ENCODE measurements at regions of chr5 and their contacts with region 1.

Region 1: GRCh38 chr5:148730943-148731861 is 76.9 kb upstream of the HTR4 start:
- DNase-seq: peak; percentile 38 to 76 (median 58)
- H3K4me3 ChIP-seq: no peak overlapping the region
- H3K4me3 Mint-ChIP-seq: peak overlapping the region; percentile 59 to 89 (median 79)
- H3K27ac ChIP-seq: peak overlapping the region; percentile 10
- H3K27ac Mint-ChIP-seq: peak overlapping the region in 7 of 8 donors; percentile 23 to 83 (median 69)
- H3K4me1 ChIP-seq: no peaks in the 10 kb centered on the region
- H3K4me1 Mint-ChIP-seq: peaks cover 10 to 23% (median 18%) of the 10 kb centered on the region in 3 donors
- H3K27me3 ChIP-seq: no peaks in the 10 kb centered on the region
- H3K27me3 Mint-ChIP-seq: peaks cover 3 to 4% of the 10 kb centered on the region in 2 donors

Region 2: DNA sequence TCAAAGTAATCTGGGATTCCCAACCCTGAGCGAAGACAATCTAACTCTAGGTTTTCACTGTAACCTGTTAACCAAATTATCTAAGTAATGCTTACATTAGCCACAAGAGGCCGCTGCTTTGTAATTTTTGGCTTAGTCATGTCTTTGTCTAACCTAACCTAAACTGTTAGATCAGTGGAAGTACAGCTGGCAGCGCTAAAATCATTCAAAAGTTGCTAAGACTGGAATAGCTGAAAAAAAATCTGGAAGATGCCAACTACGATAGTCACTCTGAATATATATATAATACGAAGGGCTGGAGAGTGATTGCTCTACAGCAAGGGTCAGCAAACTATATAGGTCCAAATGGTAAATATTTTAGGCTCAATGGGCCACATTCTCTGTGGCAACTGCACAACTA is 287.2 kb before region 1 on chr5:
- CTCF ChIA-PET with region 1: interaction called, 39 read pairs
- POLR2A ChIA-PET with region 1: no interaction called
- DNase-seq: peak in 4 of 5 donors; percentile 7 to 41 (median 16)
- H3K4me3 ChIP-seq: no peak overlapping the region
- H3K4me3 Mint-ChIP-seq: no peak overlapping the region
- H3K27ac ChIP-seq: no peak overlapping the region
- H3K27ac Mint-ChIP-seq: peak overlapping the region in 2 of 8 donors; percentile 38 to 64
- H3K4me1 ChIP-seq: no peaks in the 10 kb centered on the region
- H3K4me1 Mint-ChIP-seq: peaks cover 0 to 3% (median 0%) of the 10 kb centered on the region in 3 donors
- H3K27me3 ChIP-seq: no peaks in the 10 kb centered on the region
- H3K27me3 Mint-ChIP-seq: no peaks in the 10 kb centered on the region

Region 3: DNA sequence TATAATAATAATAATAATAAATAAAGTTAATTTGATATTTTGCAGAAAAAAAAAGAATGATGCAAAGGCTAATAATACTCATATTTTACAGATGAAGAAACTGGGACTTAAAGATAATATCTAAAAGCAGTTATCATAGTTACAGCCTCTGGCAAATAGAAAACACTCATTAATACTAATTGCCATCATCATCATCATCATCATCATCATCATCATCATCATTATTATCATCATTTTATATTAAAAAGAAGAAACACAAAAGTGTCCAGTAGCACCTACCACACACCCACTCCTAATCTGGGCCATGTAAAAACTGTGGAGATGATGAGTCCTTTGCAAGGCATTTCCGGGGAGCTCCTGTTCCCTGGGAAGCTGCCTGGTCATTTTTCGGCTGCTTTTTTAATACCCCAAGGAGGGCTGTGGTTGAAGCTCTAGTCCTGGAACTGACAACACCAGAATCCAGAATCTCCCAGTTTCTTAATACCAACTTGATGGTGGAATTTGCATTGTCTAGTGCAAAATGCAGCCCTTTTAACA is 147.7 kb before region 1 on chr5:
- CTCF ChIA-PET with region 1: no interaction called
- POLR2A ChIA-PET with region 1: no interaction called
- DNase-seq: no peak
- H3K4me3 ChIP-seq: no peak overlapping the region
- H3K4me3 Mint-ChIP-seq: no peak overlapping the region
- H3K27ac ChIP-seq: no peak overlapping the region
- H3K27ac Mint-ChIP-seq: no peak overlapping the region
- H3K4me1 ChIP-seq: no peaks in the 10 kb centered on the region
- H3K4me1 Mint-ChIP-seq: no peaks in the 10 kb centered on the region
- H3K27me3 ChIP-seq: no peaks in the 10 kb centered on the region
- H3K27me3 Mint-ChIP-seq: peaks cover 0 to 5% of the 10 kb centered on the region in 2 donors

Region 4: DNA sequence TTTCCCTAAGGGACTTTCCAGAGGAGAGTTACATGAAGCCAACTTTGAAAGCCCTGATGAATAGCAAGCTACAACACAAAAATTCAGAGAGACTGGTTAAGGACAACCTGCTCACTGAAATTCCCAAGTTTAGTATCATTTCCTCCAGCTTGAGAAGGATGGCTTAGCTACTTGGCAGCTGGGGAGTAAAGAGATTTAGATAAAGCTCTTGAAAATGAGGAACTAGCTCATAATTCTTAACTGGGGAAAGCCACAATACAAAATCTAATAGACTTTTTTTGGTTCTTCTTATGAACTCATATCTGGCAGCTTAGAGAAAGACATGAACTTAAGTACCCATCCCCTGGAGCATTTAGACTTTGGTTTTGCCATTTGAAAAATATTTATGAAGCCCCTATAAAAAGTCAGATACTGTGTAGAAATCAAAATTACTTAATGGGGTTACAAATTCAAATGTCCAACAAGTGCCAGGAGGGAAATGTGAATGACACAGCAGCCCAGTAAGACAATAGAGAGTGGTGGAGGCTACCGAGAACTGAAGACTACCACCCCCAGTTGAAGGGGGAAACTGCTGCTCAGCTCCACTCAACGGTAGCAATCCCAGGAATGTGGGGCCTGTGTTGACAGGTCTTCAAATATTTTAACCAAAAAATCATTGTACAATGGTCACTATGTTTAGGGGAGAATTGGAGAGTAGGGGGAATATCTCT is 15.8 kb after region 1 on chr5:
- CTCF ChIA-PET with region 1: interaction called, 16 read pairs
- POLR2A ChIA-PET with region 1: no interaction called
- DNase-seq: no peak
- H3K4me3 ChIP-seq: no peak overlapping the region
- H3K4me3 Mint-ChIP-seq: no peak overlapping the region
- H3K27ac ChIP-seq: no peak overlapping the region
- H3K27ac Mint-ChIP-seq: peak overlapping the region in 1 of 8 donors; percentile 81
- H3K4me1 ChIP-seq: no peaks in the 10 kb centered on the region
- H3K4me1 Mint-ChIP-seq: no peaks in the 10 kb centered on the region
- H3K27me3 ChIP-seq: no peaks in the 10 kb centered on the region
- H3K27me3 Mint-ChIP-seq: peaks cover 0 to 3% of the 10 kb centered on the region in 2 donors

Region 5: DNA sequence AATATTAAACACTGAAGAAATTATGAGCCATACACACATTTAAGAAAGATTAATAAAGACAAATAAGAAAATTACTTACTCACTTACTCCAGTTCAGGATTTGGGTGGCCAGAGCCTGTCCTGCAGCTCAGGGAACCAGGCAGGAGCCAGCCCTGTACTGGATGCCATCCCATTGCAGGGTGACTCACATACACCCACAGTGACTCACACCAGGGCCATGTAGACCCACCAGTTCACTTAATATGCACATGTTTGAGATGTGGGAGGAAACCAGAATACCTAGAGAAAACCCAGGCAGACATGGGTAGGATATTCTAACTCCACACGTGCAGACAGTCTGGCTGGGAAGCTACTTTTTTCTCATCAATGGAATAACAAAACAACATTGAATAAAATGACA is 45.6 kb after region 1 on chr5:
- CTCF ChIA-PET with region 1: no interaction called
- POLR2A ChIA-PET with region 1: no interaction called
- DNase-seq: no peak
- H3K4me3 ChIP-seq: no peak overlapping the region
- H3K4me3 Mint-ChIP-seq: no peak overlapping the region
- H3K27ac ChIP-seq: no peak overlapping the region
- H3K27ac Mint-ChIP-seq: no peak overlapping the region
- H3K4me1 ChIP-seq: no peaks in the 10 kb centered on the region
- H3K4me1 Mint-ChIP-seq: no peaks in the 10 kb centered on the region
- H3K27me3 ChIP-seq: no peaks in the 10 kb centered on the region
- H3K27me3 Mint-ChIP-seq: peaks cover 6 to 22% of the 10 kb centered on the region in 2 donors

Region 6: GRCh38 chr5:148957591-148958202 is 226.5 kb after region 1 on chr5:
- CTCF ChIA-PET with region 1: interaction called, 71 read pairs
- POLR2A ChIA-PET with region 1: no interaction called
- DNase-seq: peak; percentile 32 to 66 (median 46)
- H3K4me3 ChIP-seq: no peak overlapping the region
- H3K4me3 Mint-ChIP-seq: no peak overlapping the region
- H3K27ac ChIP-seq: no peak overlapping the region
- H3K27ac Mint-ChIP-seq: peak overlapping the region in 3 of 8 donors; percentile 30 to 85 (median 52)
- H3K4me1 ChIP-seq: no peaks in the 10 kb centered on the region
- H3K4me1 Mint-ChIP-seq: peaks cover 5 to 9% (median 8%) of the 10 kb centered on the region in 3 donors
- H3K27me3 ChIP-seq: no peaks in the 10 kb centered on the region
- H3K27me3 Mint-ChIP-seq: no peaks in the 10 kb centered on the region

Region 7: DNA sequence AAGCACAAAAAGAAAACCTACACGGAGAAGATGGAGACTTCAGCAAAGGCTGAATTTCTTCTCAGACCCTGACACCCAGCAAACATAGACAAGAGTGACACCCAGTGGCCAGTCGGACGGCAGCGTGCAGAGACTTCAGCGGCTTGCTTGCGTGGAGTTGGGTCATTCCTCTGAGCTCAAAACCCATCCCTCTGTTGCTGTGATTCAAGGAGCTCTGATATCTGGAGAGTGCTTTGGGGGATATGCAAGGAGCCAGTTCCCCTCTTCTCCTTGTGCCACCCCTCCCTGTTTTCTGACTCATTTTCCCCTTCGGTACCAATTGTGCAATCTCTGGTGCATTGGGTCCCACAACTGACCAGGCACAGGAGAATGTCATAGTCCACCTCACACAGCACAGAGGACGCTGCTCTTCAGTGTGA is 304.2 kb after region 1 on chr5:
- CTCF ChIA-PET with region 1: interaction called, 249 read pairs
- POLR2A ChIA-PET with region 1: no interaction called
- DNase-seq: peak; percentile 33 to 77 (median 49)
- H3K4me3 ChIP-seq: no peak overlapping the region
- H3K4me3 Mint-ChIP-seq: peak overlapping the region in 1 of 7 donors; percentile 42
- H3K27ac ChIP-seq: no peak overlapping the region
- H3K27ac Mint-ChIP-seq: no peak overlapping the region
- H3K4me1 ChIP-seq: no peaks in the 10 kb centered on the region
- H3K4me1 Mint-ChIP-seq: peaks cover 4 to 25% (median 6%) of the 10 kb centered on the region in 3 donors
- H3K27me3 ChIP-seq: no peaks in the 10 kb centered on the region
- H3K27me3 Mint-ChIP-seq: peaks cover 2 to 11% of the 10 kb centered on the region in 2 donors